ENCODE measurements at regions of chr12 and their contacts with region 1.

Region 1: GRCh38 chr12:85866986-85867776 is 6.9 kb upstream of the NTS start:
- DNase-seq: no peak
- H3K4me3 ChIP-seq: no peak overlapping the region
- H3K27ac ChIP-seq: no peak overlapping the region
- H3K4me1 ChIP-seq: no peaks in the 10 kb centered on the region
- H3K27me3 ChIP-seq: no peaks in the 10 kb centered on the region
- CTCF ChIP-seq: peak; percentile 60 to 74 (median 72)
- EP300 ChIP-seq: no peak
- POLR2A ChIP-seq: no peak

Region 2: DNA sequence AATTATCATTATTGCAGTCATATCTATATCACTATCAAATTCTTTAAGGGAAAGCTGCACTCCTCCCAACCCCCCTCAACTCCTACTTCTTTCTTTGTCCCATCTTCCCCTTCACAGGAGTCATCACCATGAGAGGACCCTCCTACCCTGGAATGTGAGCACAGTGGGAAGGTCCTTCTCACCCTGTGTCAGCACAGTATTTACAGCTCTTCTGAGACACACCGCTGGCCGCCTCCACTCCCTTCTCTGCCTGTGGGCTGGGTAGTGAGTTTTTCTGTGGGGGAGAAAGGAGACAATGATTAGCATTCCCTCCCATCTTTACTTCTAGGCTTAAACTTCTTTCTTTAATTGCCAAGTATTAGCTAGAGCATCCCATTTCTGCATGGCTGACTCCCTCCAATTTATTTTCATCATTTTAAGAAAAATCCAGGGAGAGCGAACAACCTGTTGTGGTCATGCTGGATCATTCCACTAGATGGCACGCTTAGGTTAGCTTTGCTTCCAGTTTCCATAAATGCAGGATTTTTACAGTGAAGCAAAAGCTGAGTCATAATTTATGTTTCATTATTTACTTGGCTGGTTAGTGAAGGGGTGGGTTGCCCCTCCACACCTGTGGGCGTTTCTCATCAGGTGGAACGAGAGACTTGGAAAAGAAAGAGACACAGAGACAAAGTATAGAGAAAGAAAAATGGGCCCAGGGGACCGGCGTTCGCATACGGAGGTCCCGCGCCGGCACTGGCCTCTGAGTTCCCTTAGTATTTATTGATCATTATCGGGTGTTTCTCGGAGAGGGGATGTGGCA is 398.6 kb before region 1 on chr12:
- in situ Hi-C with region 1: loop called in 3 of 4 experiments (anchors 5 to 10 kb)
- intact Hi-C with region 1: loop called (anchors 10 kb)
- DNase-seq: peak; percentile 45
- H3K4me3 ChIP-seq: peak overlapping the region; percentile 25 to 51 (median 28)
- H3K27ac ChIP-seq: no peak overlapping the region
- H3K4me1 ChIP-seq: peaks cover 0 to 7% (median 2%) of the 10 kb centered on the region in 4 donors
- H3K27me3 ChIP-seq: peaks cover 5% of the 10 kb centered on the region
- CTCF ChIP-seq: peak; percentile 68 to 78 (median 75)
- EP300 ChIP-seq: no peak
- POLR2A ChIP-seq: no peak

Region 3: GRCh38 chr12:85476756-85477155 is 390.4 kb before region 1 on chr12:
- in situ Hi-C with region 1: loop called in 3 of 4 experiments (anchors 5 to 25 kb)
- intact Hi-C with region 1: loop called (anchors 10 kb)
- DNase-seq: no peak
- H3K4me3 ChIP-seq: no peak overlapping the region
- H3K27ac ChIP-seq: no peak overlapping the region
- H3K4me1 ChIP-seq: no peaks in the 10 kb centered on the region
- H3K27me3 ChIP-seq: no peaks in the 10 kb centered on the region
- CTCF ChIP-seq: no peak
- EP300 ChIP-seq: no peak
- POLR2A ChIP-seq: no peak

Region 4: DNA sequence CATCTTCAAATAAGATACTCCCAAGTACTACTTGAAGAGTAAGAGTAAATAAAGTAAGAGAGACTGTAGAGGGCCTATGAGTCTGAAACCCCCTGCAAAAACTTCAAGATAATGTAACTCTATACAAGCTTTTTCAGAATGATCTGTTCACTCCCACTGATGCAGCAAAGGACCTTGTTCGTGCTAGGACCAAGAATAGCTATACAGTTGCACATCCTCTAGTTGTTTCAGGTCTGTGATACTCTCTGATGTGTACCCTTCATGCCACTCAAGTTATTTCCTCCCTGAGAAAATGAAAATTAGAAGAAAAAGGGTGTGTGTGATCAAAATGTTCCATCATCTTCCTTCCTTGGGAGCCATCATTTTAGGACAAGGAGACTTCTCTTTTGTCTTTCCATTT is 382.8 kb before region 1 on chr12:
- in situ Hi-C with region 1: loop called in 2 of 4 experiments (anchors 10 to 25 kb)
- intact Hi-C with region 1: loop called (anchors 10 kb)
- DNase-seq: no peak
- H3K4me3 ChIP-seq: no peak overlapping the region
- H3K27ac ChIP-seq: no peak overlapping the region
- H3K4me1 ChIP-seq: no peaks in the 10 kb centered on the region
- H3K27me3 ChIP-seq: no peaks in the 10 kb centered on the region
- CTCF ChIP-seq: no peak
- EP300 ChIP-seq: no peak
- POLR2A ChIP-seq: no peak

Region 5: GRCh38 chr12:85568395-85569103 is 298.6 kb before region 1 on chr12:
- in situ Hi-C with region 1: loop called in 2 of 4 experiments (anchors 10 to 25 kb)
- intact Hi-C with region 1: loop called (anchors 10 kb)
- DNase-seq: peak; percentile 16
- H3K4me3 ChIP-seq: no peak overlapping the region
- H3K27ac ChIP-seq: no peak overlapping the region
- H3K4me1 ChIP-seq: peaks cover 0 to 3% (median 1%) of the 10 kb centered on the region in 4 donors
- H3K27me3 ChIP-seq: no peaks in the 10 kb centered on the region
- CTCF ChIP-seq: no peak
- EP300 ChIP-seq: no peak
- POLR2A ChIP-seq: no peak

Region 6: DNA sequence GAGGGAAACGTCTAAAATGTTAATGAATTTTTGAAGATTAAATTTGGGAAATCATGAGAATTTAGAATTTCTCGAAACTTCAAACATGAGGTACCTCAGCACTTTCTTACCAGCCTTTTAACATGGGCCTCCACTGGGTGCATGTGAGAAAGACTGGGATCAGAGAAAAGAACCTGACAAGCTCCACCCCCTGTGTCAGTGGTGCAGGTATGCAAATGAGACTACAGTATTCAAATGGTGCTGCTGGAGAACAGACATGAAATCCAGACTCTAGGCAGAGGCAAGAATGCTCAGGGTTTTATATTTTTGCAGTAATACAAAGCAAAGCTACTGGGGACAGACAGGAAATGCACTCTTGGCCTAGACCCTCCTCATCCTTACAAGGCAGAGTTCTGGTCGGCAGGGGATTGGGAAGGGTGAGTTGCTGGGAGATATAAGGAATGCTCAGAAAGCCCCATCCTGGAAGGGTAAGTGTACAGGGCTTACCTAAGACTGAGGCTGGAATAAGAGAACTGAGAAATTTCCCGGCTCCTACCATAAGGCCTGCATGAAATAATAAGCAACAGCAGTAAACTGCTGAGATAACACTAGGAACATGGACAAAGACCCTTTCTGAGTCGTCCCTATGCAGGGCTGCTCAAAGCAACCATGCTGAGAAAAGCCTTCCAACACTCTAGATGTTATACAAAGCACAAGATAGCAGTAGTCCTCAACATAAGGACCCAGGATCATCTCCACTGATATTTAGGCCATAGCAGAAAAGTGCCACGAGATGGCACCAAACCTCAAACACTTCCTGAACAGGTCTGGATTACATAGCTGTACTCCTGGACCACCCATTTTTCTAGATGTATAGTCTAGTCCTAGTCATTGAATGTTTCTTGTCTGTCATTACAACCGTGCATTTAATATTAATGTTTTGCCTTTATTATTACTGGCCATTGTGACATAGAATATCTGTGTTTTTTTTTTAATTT is 291.8 kb before region 1 on chr12:
- in situ Hi-C with region 1: loop called (anchors 10 to 25 kb)
- intact Hi-C with region 1: loop called (anchors 10 kb)
- DNase-seq: peak; percentile 32
- H3K4me3 ChIP-seq: no peak overlapping the region
- H3K27ac ChIP-seq: no peak overlapping the region
- H3K4me1 ChIP-seq: peaks cover 0 to 12% (median 1%) of the 10 kb centered on the region in 4 donors
- H3K27me3 ChIP-seq: no peaks in the 10 kb centered on the region
- CTCF ChIP-seq: peak; percentile 29 to 57 (median 42)
- EP300 ChIP-seq: no peak
- POLR2A ChIP-seq: no peak

Region 7: GRCh38 chr12:85642810-85643209 is 224.4 kb before region 1 on chr12:
- in situ Hi-C with region 1: no loop called
- intact Hi-C with region 1: no loop called
- DNase-seq: no peak
- H3K4me3 ChIP-seq: no peak overlapping the region
- H3K27ac ChIP-seq: no peak overlapping the region
- H3K4me1 ChIP-seq: no peaks in the 10 kb centered on the region
- H3K27me3 ChIP-seq: no peaks in the 10 kb centered on the region
- CTCF ChIP-seq: peak in 3 of 5 experiments; percentile 14 to 25 (median 17)
- EP300 ChIP-seq: no peak
- POLR2A ChIP-seq: no peak

Region 8: DNA sequence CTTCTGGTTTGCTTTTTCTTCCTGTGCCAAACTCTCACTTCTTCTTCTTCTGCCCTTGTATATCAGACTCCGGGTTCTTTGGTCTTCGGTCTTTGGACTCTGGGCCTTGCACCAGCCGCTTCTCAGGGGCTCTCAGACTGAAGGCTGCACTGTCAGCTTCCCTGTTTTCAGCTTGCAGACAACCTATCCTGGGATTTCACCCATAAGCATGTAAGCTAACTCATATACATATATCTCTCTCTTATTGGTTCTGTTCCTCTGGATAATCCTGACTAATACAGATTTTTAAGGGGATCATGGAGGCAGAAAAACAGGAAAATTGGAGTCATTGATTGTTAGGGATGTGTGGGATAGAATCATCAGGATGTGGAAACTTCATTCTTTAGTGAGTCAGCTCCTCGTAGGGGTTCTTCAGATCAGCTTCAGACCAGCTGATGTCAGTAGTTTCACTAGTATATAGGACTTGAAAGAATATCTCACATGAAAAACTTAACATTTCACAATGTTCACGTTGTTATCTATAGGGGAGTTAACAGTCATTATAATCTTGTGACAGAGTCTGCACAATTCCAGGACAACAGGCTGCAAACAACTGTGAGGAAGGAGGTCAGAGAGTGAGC is 133.8 kb before region 1 on chr12:
- in situ Hi-C with region 1: no loop called
- intact Hi-C with region 1: no loop called
- DNase-seq: no peak
- H3K4me3 ChIP-seq: no peak overlapping the region
- H3K27ac ChIP-seq: no peak overlapping the region
- H3K4me1 ChIP-seq: no peaks in the 10 kb centered on the region
- H3K27me3 ChIP-seq: no peaks in the 10 kb centered on the region
- CTCF ChIP-seq: no peak
- EP300 ChIP-seq: no peak
- POLR2A ChIP-seq: no peak

Region 9: GRCh38 chr12:85804663-85805062 is 62.5 kb before region 1 on chr12:
- in situ Hi-C with region 1: no loop called
- intact Hi-C with region 1: no loop called
- DNase-seq: no peak
- H3K4me3 ChIP-seq: no peak overlapping the region
- H3K27ac ChIP-seq: peak overlapping the region in 1 of 4 donors; percentile 27
- H3K4me1 ChIP-seq: no peaks in the 10 kb centered on the region
- H3K27me3 ChIP-seq: no peaks in the 10 kb centered on the region
- CTCF ChIP-seq: no peak
- EP300 ChIP-seq: no peak
- POLR2A ChIP-seq: no peak